Right cardiac atrium (tissue), 5 donors: ENCODE measurements at regions of chr15 and their contacts with region 1.

Region 1: DNA sequence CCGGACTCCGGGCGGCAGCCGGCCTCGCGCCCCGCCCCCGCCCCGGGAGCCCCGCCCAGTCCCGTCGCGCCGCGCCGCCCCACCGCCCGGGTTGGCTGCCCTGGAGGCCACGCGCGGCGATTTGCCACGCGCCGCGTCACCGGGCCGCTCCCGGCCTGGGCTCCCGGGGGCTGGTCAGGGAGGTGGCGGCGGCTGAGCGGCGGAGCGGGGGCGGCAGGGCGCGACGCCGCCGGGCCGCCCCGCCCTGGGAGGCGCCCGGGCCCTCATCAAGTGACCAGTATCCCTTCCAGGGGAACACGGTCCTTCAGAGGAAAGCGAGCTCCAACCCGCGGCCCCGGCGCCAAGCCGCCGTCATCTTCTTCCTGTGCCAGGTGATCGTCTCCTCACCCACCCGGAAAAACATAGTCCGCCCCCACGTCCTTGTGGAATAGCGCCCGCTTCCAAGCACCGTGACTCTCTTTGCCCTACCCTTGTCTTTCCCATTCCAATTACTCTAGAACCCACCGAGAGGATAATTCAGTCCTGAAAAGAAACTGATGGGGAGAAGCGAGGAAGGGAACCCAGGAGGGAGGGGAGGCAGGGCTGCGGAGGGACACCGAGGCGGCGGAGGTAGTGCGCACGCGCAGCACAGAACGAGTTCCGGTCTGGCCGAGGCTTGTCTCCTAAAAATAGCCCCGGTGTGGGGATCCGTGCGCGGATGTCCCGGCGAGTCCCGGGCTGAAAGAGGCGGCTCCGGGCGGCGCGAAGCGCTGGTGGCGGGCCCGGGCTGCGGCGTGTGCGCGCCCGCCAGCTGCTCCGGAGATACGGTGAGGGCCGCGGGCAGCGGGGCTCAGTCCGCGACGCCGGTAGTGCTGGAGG is at the start of gene MEF2A:
- DNase-seq: peak; percentile 96 to 98 (median 98)
- ATAC-seq: peak; percentile 86 to 89
- H3K4me3 ChIP-seq: peak within 1 kb of the TSS; percentile 65
- H3K27ac ChIP-seq: peak within 1 kb of the TSS; percentile 99
- H3K4me1 ChIP-seq: peaks cover 7% of the 10 kb centered on the region
- H3K27me3 ChIP-seq: no peaks in the 10 kb centered on the region
- total RNA-seq, gene MEF2A: 145 to 177 (median 174) TPM

Region 2: DNA sequence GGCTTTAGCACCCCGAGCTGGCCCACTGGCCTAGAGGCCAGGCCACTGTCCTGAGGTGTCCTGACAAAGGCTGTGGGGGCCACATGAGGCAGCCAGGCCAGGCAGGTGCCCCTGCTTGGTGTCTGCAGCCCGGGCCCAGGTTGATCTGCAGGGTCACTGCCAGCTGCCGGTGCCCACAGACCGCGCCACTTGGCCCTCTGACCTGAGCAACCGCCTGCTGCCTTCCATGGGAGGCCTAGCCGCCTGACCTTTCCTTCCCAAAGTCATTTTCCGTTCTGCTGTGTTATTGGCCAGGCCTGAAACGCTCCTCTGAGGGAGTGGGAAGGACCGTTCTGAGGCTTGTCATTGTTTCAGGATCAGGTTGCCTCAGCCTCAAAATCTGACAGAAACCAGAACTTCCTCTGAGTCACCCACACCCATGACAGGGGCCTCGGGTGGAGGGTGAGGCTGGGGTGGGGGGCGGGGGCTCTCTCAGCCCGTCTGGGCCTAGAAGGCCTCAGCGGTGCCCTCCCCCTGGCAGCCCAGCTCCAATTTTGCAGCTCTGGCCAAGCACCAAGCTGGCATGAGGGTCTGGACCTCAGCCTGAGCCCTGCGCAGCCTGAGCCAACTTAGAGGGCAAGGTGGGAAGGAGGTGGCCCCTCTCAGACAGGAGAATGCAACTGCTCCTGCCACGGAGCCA is 140.4 kb before region 1 on chr15:
- intact Hi-C with region 1: loop called in 2 of 4 experiments (anchors 10 kb)
- DNase-seq: peak; percentile 53 to 82 (median 69)
- ATAC-seq: peak; percentile 88 to 96
- H3K4me3 ChIP-seq: no peak overlapping the region
- H3K27ac ChIP-seq: peak overlapping the region; percentile 97
- H3K4me1 ChIP-seq: peaks cover 10% of the 10 kb centered on the region
- H3K27me3 ChIP-seq: no peaks in the 10 kb centered on the region

Region 3: GRCh38 chr15:99452774-99453636 is 112.5 kb before region 1 on chr15:
- intact Hi-C with region 1: loop called in 2 of 4 experiments (anchors 10 kb)
- DNase-seq: peak; percentile 95 to 97 (median 96)
- ATAC-seq: peak; percentile 63 to 72
- H3K4me3 ChIP-seq: no peak overlapping the region
- H3K27ac ChIP-seq: peak overlapping the region; percentile 80
- H3K4me1 ChIP-seq: peaks cover 50% of the 10 kb centered on the region
- H3K27me3 ChIP-seq: no peaks in the 10 kb centered on the region

Region 4: DNA sequence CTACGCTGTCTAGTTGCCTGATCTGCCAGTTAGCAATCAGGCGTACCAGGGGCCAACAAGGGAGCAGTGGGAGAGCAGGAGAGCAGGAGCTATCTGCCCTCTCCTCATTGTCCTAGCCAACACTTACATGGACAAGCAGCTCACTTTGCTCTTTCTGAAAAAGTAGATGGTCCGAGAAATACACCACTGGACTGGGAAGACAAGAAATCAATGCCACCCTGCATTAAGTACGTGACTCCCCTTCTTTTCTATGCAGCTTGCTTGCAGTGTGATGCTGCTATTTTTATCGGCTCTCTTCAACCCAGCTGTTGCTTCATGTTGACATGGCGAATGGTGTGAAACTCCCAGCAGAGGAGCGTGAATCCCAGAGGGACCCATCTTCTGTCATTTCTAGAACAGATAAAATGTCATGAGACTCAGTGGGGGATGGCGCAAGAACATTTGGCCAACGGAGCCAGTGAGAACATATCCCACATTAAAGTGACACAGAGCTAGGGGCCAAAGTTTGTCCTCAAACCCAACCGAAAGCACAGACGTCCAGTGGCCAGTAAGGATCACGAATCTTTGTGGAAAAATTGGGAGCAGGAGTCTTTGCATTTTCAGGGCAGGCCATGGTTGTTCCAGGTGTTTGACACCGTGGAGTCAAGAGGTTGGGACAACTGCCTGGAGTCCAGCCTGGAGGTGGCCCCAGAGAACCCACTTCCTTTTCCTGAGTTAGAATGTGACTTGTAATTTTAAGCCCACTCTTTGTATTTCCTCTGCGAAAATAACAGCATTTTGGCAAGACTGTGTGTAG is 53.5 kb before region 1 on chr15:
- intact Hi-C with region 1: loop called in 1 of 4 experiments (anchors 5 kb)
- DNase-seq: peak; percentile 60 to 73 (median 64)
- ATAC-seq: peak; percentile 50 to 56
- H3K4me3 ChIP-seq: no peak overlapping the region
- H3K27ac ChIP-seq: peak overlapping the region; percentile 91
- H3K4me1 ChIP-seq: peaks cover 18% of the 10 kb centered on the region
- H3K27me3 ChIP-seq: no peaks in the 10 kb centered on the region

Region 5: GRCh38 chr15:99704444-99704838 is 138.9 kb after region 1 on chr15:
- intact Hi-C with region 1: loop called in 2 of 4 experiments (anchors 10 kb)
- DNase-seq: no peak
- ATAC-seq: peak; percentile 71 to 77
- H3K4me3 ChIP-seq: no peak overlapping the region
- H3K27ac ChIP-seq: no peak overlapping the region
- H3K4me1 ChIP-seq: peaks cover 12% of the 10 kb centered on the region
- H3K27me3 ChIP-seq: no peaks in the 10 kb centered on the region

Region 6: DNA sequence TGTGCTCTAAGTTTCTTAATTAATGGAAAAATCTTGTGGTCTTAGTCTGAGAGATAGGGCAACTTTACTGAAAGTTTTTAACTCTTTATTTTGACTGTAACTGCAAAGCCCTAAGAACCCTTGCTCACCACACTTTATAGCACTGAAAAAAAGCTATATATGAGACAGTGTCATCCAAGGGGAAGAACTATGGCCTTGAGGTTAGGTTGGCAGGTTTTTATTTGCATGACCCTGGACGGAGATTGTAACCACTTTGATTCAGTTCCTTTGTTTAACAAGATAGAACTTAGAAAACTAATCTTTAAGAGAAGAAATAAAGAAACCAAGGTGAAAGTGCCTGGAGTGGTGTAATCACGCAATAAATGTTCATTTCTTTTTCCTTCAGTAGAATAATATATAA is 198.3 kb after region 1 on chr15:
- intact Hi-C with region 1: no loop called
- DNase-seq: no peak
- ATAC-seq: no peak
- H3K4me3 ChIP-seq: no peak overlapping the region
- H3K27ac ChIP-seq: no peak overlapping the region
- H3K4me1 ChIP-seq: no peaks in the 10 kb centered on the region
- H3K27me3 ChIP-seq: no peaks in the 10 kb centered on the region